Activated T-helper 1 cell treated with anti-CD3 and anti-CD28 coated beads, Interleukin-12 subunit alpha, Interleukin-12 subunit beta, Interleukin-2, Interleukin-4 antibody, amounts not matched to agents 30 ng/mL and 10 ng/mL and 1 ng/mL, durations not matched to agents 14 hours and 24 hours and 36 hours (primary cell): ENCODE measurements at regions of chr17 and their contacts with region 1.

Region 1: DNA sequence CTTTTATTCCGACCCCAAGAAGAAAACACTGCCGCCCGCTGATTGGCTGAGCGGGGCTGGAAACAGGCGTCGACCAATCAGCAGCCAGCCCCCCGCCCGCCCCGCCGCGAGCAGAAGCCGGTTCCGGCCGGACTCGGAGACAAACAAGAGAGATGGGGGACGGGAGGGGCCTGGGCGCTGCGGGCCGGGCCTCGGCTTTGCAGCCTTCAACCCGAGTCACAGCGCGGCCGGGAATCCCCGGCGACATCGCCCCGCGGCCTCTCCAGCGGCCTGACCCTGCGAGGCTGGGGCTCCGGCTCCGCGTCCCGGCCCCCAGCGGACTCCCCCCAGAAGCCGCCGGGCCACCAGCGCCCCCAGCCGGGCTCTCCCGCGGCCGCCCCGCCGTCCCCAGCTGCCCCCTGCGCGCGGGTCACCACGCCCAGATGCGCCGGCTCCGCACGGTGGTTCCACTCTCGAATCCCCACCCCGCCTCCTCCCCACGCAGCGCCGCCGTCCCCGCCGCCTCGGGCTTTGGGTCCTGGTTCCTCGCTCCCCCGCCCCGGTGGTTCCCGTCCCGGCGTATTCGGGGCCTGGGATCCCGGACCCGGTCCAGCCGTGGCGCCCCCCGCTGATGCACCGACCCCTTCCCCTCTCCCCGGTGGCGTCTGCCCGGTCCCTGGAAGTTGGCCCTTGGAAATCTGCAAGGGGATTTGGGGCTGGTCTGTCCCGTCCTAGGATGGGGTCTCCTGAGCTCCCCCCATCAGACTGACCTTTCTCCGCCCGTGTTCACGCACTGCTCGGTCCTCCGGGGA is 417 bp upstream of the SLC43A2 start:
- DNase-seq: peak; percentile 80
- H3K4me3 Mint-ChIP-seq: peak overlapping the region; percentile 90
- H3K27ac Mint-ChIP-seq: peak overlapping the region; percentile 90
- H3K4me1 Mint-ChIP-seq: peaks cover 16% of the 10 kb centered on the region
- H3K27me3 Mint-ChIP-seq: peaks cover 38% of the 10 kb centered on the region

Region 2: DNA sequence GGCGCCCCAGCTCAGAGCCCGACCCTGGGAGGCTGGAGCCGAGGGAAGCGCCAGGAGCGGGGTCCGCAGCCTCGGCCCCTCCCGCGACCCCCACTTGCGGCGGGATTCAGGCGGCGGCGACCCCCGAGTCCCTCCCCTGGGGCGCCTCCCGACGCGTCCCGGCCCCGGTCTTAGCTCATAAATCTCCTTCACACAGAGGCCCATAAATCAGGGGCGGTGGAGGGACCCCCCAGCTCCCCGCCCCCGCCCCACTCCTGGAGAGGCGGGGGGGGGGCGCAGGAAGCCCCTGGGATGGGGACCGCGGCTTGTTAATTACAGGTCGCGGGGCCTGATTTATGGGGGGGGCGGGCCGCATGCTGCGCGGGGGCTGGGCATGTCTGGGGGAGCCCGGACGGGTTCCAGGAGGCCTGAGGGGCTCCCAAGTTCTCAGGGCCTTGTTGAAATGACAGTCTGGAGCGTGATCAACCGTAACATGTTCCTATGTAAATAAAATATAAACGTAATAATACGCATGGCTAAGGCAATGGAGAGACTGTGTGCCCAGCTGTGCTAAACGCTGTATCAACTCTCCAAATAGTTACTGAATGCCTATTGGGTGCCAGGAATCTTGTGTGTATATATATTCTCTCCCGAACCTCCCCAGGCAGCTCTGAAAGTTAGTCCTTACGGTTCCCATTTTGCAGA is 368.8 kb before region 1 on chr17:
- intact Hi-C with region 1: loop called (anchors 5 kb)
- DNase-seq: no peak
- H3K4me3 Mint-ChIP-seq: peak overlapping the region; percentile 10
- H3K27ac Mint-ChIP-seq: no peak overlapping the region
- H3K4me1 Mint-ChIP-seq: peaks cover 19% of the 10 kb centered on the region
- H3K27me3 Mint-ChIP-seq: peaks cover 50% of the 10 kb centered on the region

Region 3: GRCh38 chr17:1488030-1488863 is 140.8 kb before region 1 on chr17:
- intact Hi-C with region 1: loop called (anchors 1 kb)
- DNase-seq: peak; percentile 64
- H3K4me3 Mint-ChIP-seq: peak overlapping the region; percentile 84
- H3K27ac Mint-ChIP-seq: no peak overlapping the region
- H3K4me1 Mint-ChIP-seq: peaks cover 24% of the 10 kb centered on the region
- H3K27me3 Mint-ChIP-seq: peaks cover 5% of the 10 kb centered on the region

Region 4: GRCh38 chr17:1573916-1574696 is 54.9 kb before region 1 on chr17:
- intact Hi-C with region 1: loop called (anchors 1 kb)
- DNase-seq: peak; percentile 40
- H3K4me3 Mint-ChIP-seq: no peak overlapping the region
- H3K27ac Mint-ChIP-seq: no peak overlapping the region
- H3K4me1 Mint-ChIP-seq: peaks cover 6% of the 10 kb centered on the region
- H3K27me3 Mint-ChIP-seq: peaks cover 3% of the 10 kb centered on the region

Region 5: GRCh38 chr17:1648963-1649843 is 20.2 kb after region 1 on chr17:
- intact Hi-C with region 1: loop called (anchors 1 kb)
- DNase-seq: peak; percentile 92
- H3K4me3 Mint-ChIP-seq: peak overlapping the region; percentile 59
- H3K27ac Mint-ChIP-seq: no peak overlapping the region
- H3K4me1 Mint-ChIP-seq: peaks cover 22% of the 10 kb centered on the region
- H3K27me3 Mint-ChIP-seq: peaks cover 2% of the 10 kb centered on the region